CD8-positive, alpha-beta T cell (primary cell): ENCODE measurements at regions of chr13 and their contacts with region 1.

Region 1: GRCh38 chr13:67230404-67231288 is 510 bp upstream of the PCDH9 start:
- DNase-seq: peak; percentile 59 to 89 (median 76)
- ATAC-seq: peak; percentile 97
- H3K4me3 ChIP-seq: peak overlapping the region; percentile 65 to 72
- H3K4me3 Mint-ChIP-seq: no peak overlapping the region
- H3K27ac ChIP-seq: no peak overlapping the region
- H3K27ac Mint-ChIP-seq: no peak overlapping the region
- H3K4me1 ChIP-seq: peaks cover 14% of the 10 kb centered on the region
- H3K4me1 Mint-ChIP-seq: peaks cover 9% of the 10 kb centered on the region
- H3K27me3 ChIP-seq: no peaks in the 10 kb centered on the region
- H3K27me3 Mint-ChIP-seq: peaks cover 9% of the 10 kb centered on the region
- CTCF ChIP-seq: no peak

Region 2: DNA sequence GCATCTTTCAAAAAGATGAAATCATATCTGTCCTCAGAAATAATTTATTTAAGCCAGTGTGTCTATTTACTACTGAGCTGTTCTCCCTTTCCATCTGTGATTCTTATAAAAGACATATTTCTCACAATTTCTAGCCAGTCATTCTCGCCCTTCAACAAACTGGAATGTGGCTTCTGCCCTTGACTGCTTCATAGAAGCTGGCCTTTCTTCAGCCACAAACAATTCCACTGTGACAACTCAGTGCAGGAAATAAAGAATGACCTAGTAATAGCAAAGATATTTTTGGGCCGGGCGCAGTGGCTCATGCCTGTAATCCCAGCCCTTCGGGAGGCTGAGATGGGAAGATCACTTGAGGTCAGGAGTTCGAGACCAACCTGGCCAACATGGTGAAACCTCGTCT is 656.0 kb before region 1 on chr13:
- CTCF ChIA-PET with region 1: no interaction called
- POLR2A ChIA-PET with region 1: no interaction called
- intact Hi-C with region 1: no loop called
- DNase-seq: no peak
- ATAC-seq: no peak
- H3K4me3 ChIP-seq: no peak overlapping the region
- H3K4me3 Mint-ChIP-seq: no peak overlapping the region
- H3K27ac ChIP-seq: no peak overlapping the region
- H3K27ac Mint-ChIP-seq: no peak overlapping the region
- H3K4me1 ChIP-seq: no peaks in the 10 kb centered on the region
- H3K4me1 Mint-ChIP-seq: no peaks in the 10 kb centered on the region
- H3K27me3 ChIP-seq: no peaks in the 10 kb centered on the region
- H3K27me3 Mint-ChIP-seq: no peaks in the 10 kb centered on the region
- CTCF ChIP-seq: no peak

Region 3: GRCh38 chr13:66624302-66624701 is 606.3 kb before region 1 on chr13:
- CTCF ChIA-PET with region 1: no interaction called
- POLR2A ChIA-PET with region 1: no interaction called
- intact Hi-C with region 1: loop called in 1 of 2 experiments (anchors 10 kb)
- DNase-seq: no peak
- ATAC-seq: no peak
- H3K4me3 ChIP-seq: no peak overlapping the region
- H3K4me3 Mint-ChIP-seq: no peak overlapping the region
- H3K27ac ChIP-seq: no peak overlapping the region
- H3K27ac Mint-ChIP-seq: no peak overlapping the region
- H3K4me1 ChIP-seq: no peaks in the 10 kb centered on the region
- H3K4me1 Mint-ChIP-seq: no peaks in the 10 kb centered on the region
- H3K27me3 ChIP-seq: no peaks in the 10 kb centered on the region
- H3K27me3 Mint-ChIP-seq: no peaks in the 10 kb centered on the region
- CTCF ChIP-seq: no peak